Gastrocnemius medialis (tissue), 4 donors: ENCODE measurements at regions of chr12 and their contacts with region 1.

Region 1: DNA sequence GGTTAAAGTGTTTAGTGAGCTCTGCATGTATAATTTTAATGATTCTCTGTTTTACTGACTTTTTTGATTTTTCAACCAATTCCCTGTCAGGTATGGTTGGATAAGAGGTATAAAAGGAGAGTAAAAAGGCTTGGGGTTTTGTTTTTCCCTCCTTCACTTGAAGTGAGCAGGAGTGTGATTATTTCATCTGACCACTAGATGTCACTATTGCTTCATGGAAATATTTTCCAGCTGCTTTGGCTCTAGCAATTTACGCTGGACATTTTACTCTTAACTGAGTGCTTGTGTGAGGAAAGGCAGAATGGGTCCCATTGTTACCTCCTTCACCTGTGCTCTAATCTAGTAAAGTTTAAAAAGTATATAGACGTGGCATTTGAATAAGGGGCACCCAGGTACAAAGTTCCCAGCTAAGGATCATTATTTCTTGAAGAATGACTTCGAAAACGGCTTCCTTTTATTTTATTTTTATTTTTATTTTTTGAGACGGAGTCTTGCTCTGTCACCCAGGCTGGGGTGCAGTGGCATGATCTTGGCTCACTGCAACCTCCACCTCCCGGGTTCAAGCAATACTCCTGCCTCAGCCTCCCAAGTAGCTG is 66.5 kb downstream of the TBC1D30 start:
- DNase-seq: no peak
- ATAC-seq: peak; percentile 56 to 68
- H3K4me3 ChIP-seq: no peak overlapping the region
- H3K27ac ChIP-seq: no peak overlapping the region
- H3K4me1 ChIP-seq: no peaks in the 10 kb centered on the region
- H3K27me3 ChIP-seq: no peaks in the 10 kb centered on the region
- CTCF ChIP-seq: peak; percentile 71 to 84 (median 79)
- POLR2A ChIP-seq: no peak

Region 2: GRCh38 chr12:64440100-64440499 is 450.9 kb before region 1 on chr12:
- in situ Hi-C with region 1: no loop called
- intact Hi-C with region 1: no loop called
- DNase-seq: no peak
- ATAC-seq: no peak
- H3K4me3 ChIP-seq: no peak overlapping the region
- H3K27ac ChIP-seq: no peak overlapping the region
- H3K4me1 ChIP-seq: no peaks in the 10 kb centered on the region
- H3K27me3 ChIP-seq: no peaks in the 10 kb centered on the region
- CTCF ChIP-seq: no peak
- POLR2A ChIP-seq: no peak

Region 3: GRCh38 chr12:64931981-64932380 is 41.0 kb after region 1 on chr12:
- in situ Hi-C with region 1: no loop called
- intact Hi-C with region 1: no loop called
- DNase-seq: no peak
- ATAC-seq: no peak
- H3K4me3 ChIP-seq: no peak overlapping the region
- H3K27ac ChIP-seq: no peak overlapping the region
- H3K4me1 ChIP-seq: no peaks in the 10 kb centered on the region
- H3K27me3 ChIP-seq: no peaks in the 10 kb centered on the region
- CTCF ChIP-seq: no peak
- POLR2A ChIP-seq: no peak

Region 4: DNA sequence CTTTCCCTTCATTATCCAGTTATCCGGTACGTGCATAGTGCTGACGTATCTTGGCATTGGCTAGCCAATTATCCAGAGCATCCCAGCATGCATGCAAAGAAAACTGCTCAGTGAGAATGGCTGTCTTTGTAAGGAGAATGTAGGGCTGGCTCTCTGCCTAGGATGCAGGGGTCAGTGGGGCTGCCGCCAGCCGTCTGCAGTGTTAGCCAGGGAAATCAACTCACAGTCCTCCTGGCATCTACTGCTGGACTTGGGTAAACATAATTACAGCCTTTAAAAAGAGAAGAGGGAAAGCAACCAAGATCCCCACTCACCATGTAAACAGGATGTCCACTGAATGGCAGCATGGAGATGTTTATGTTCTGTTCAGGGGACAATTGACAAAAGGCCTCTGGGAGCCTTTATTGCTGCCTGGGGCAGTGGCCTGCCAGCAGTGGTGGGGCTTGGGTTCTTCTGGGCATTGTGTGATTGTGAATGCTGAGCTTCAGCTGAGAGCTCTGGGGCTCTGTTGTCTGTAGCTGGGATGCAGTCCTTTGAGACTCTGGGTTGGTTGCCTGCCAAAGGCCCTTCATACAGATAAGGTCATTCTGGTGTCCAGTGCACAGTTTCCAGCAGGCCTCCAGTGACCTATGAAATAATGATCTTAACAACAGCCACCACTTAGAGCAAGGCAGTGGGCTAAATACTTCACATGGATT is 55.3 kb after region 1 on chr12:
- in situ Hi-C with region 1: no loop called
- intact Hi-C with region 1: no loop called
- DNase-seq: no peak
- ATAC-seq: peak; percentile 36 to 39
- H3K4me3 ChIP-seq: no peak overlapping the region
- H3K27ac ChIP-seq: no peak overlapping the region
- H3K4me1 ChIP-seq: no peaks in the 10 kb centered on the region
- H3K27me3 ChIP-seq: no peaks in the 10 kb centered on the region
- CTCF ChIP-seq: no peak
- POLR2A ChIP-seq: no peak

Region 5: DNA sequence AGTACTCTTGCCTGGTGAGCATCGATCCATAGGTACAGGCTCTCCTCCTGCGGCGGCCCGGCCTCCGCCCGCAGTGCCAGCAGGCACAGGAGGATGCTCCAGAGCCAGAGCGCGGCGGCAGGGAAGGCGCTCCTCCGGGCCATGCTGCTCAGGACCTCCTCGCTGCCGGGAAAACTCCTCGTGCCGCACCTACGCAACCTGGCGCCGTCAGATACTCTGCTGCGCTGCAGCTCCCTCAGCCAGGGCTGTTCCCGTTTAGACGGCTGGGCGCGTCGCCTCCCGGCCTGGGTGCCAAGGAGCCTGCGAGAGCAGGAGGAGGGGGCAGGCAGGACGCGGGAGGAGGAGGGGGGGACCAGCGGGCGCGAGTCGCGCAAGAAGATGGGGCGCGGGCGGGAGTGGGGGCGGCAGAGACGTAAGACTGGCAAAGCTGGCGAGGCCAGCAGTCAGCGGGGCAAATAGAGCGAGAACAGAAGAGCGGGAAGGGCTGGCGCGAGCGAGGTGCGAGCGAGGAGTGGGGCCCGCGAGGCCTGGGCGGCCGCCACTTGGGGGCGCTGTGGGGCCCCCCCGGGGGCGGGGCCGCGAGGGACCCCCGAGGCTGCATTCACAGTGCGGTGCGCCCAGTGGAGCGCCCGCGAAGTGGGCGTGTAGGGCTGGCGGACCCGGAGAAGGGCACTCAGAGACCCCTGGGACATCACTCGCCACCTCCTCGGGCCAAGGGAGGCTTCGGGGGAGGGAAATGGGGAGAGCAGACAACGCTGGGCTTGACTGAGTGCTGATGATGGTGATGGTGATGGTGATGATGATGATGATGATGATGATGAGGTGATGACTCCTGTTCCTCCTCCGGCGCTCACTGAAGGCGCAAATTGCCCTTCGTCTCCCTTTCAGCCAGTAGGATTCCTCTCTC is 230.3 kb after region 1 on chr12 and contains the start of gene WIF1:
- in situ Hi-C with region 1: loop called in 2 of 4 experiments (anchors 25 kb)
- intact Hi-C with region 1: loop called (anchors 5 kb)
- DNase-seq: no peak
- ATAC-seq: no peak
- H3K4me3 ChIP-seq: peak within 1 kb of the TSS; percentile 32 to 47 (median 38)
- H3K27ac ChIP-seq: no peak within 1 kb of the TSS
- H3K4me1 ChIP-seq: peaks cover 0 to 3% of the 10 kb centered on the region in 2 donors
- H3K27me3 ChIP-seq: peaks cover 57 to 67% (median 63%) of the 10 kb centered on the region in 3 donors
- CTCF ChIP-seq: peak in 1 of 5 experiments; percentile 19
- POLR2A ChIP-seq: no peak
- total RNA-seq, gene WIF1: not detected

Region 6: DNA sequence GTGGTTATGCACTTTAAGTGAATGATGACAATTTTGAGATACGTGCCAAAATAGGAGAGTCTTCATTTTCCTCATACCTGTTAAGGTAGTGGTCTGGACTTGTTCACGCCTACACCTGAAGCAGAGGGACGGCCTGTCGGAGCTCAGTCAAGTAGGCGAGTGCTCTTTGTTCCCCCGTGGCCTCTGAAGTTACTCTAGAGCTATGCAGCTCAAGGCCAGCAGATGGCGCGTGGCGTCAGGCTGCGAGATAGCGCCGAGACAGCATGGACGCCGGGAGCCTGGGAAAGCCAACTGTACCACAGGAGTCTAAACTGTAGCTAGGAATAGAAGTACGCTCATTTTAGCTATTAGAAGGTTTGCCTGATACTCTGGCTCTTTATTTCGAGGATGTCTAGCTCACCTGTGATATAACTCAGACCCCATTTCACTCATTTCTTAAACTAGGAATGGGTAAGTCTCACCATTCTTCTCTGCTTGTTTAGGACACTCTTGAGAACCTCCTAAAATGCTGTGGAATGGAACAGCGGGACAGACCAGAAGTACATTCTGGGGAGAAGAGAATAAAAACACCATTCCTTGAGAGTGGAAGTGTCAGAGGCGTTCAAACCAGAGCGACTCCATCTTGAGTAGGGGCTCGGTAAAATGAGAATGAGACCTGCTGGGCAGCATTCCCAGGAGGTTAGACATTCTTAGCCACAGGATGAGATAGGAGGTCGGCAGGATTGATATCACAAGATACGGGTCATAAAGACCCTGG is 665.9 kb after region 1 on chr12:
- in situ Hi-C with region 1: loop called in 1 of 4 experiments (anchors 25 kb)
- intact Hi-C with region 1: no loop called
- DNase-seq: peak; percentile 18 to 45
- ATAC-seq: peak; percentile 63 to 75
- H3K4me3 ChIP-seq: no peak overlapping the region
- H3K27ac ChIP-seq: no peak overlapping the region
- H3K4me1 ChIP-seq: peaks cover 0 to 3% of the 10 kb centered on the region in 2 donors
- H3K27me3 ChIP-seq: no peaks in the 10 kb centered on the region
- CTCF ChIP-seq: peak; percentile 44 to 86 (median 73)
- POLR2A ChIP-seq: no peak

Region 7: GRCh38 chr12:66087365-66087943 is 1196.5 kb after region 1 on chr12:
- in situ Hi-C with region 1: loop called (anchors 5 to 25 kb)
- intact Hi-C with region 1: no loop called
- DNase-seq: peak; percentile 13 to 34
- ATAC-seq: peak in 1 of 2 donors; percentile 77
- H3K4me3 ChIP-seq: no peak overlapping the region
- H3K27ac ChIP-seq: no peak overlapping the region
- H3K4me1 ChIP-seq: no peaks in the 10 kb centered on the region
- H3K27me3 ChIP-seq: no peaks in the 10 kb centered on the region
- CTCF ChIP-seq: peak; percentile 32 to 64 (median 53)
- POLR2A ChIP-seq: no peak

Region 8: DNA sequence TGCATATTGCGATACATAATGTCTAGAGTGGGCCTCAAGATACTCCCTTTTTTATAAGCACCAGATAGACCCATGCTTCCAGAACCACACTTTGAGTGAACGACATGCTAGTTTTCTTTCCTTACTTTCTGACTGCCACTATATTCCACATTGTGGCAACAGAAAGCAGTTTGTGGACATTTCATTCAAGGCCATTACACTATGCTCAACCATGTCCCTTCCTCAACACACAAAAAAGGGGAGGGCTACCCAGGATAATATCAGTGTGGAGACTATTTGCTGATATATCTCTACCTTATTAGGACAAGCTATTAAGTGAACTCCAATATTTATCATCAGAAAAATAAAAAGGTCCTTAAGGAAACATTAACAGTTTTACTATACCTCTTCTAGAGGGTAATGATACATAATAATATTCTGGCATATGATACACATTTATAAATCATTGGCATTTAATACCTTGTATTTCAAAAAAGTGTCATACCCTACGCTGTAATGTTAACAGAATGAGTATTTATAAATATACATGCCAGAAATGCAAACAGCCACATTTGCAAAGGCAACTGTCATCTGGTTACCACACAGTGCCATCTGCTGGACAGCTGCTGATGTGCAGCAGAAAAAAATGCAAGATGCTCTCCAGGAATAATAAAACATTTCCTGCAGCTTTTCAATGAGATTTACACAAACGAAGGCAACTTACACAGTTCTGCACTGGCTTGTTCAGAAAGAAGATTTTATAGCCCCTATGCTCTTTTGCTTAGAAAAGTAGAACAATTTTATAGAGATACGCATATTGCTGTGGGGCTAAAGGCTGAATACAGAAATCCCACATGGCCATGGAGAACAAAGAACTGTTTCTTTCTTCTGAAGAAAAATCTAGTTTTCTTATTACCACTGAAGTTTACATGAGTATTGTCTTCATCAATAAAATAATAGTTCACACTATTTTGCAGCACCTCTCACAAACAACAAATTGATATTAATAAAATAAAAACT is 1970.1 kb after region 1 on chr12:
- in situ Hi-C with region 1: no loop called
- intact Hi-C with region 1: loop called (anchors 5 kb)
- DNase-seq: peak in 1 of 2 donors; percentile 14
- ATAC-seq: peak in 1 of 2 donors; percentile 41
- H3K4me3 ChIP-seq: no peak overlapping the region
- H3K27ac ChIP-seq: no peak overlapping the region
- H3K4me1 ChIP-seq: no peaks in the 10 kb centered on the region
- H3K27me3 ChIP-seq: no peaks in the 10 kb centered on the region
- CTCF ChIP-seq: peak; percentile 44 to 81 (median 61)
- POLR2A ChIP-seq: no peak